ENCODE measurements at regions of chr9 and their contacts with region 1.

Region 1: GRCh38 chr9:17810728-17811571 is 232.1 kb downstream of the SH3GL2 start:
- DNase-seq: peak; percentile 85
- H3K4me3 ChIP-seq: no peak overlapping the region
- H3K27ac ChIP-seq: no peak overlapping the region
- H3K4me1 ChIP-seq: no peaks in the 10 kb centered on the region
- H3K27me3 ChIP-seq: no peaks in the 10 kb centered on the region
- CTCF ChIP-seq: peak; percentile 88 to 95 (median 93)
- POLR2A ChIP-seq: no peak

Region 2: GRCh38 chr9:17509701-17510100 is 301.2 kb before region 1 on chr9:
- intact Hi-C with region 1: no loop called
- DNase-seq: no peak
- H3K4me3 ChIP-seq: no peak overlapping the region
- H3K27ac ChIP-seq: no peak overlapping the region
- H3K4me1 ChIP-seq: no peaks in the 10 kb centered on the region
- H3K27me3 ChIP-seq: no peaks in the 10 kb centered on the region
- CTCF ChIP-seq: no peak
- POLR2A ChIP-seq: no peak

Region 3: GRCh38 chr9:18208154-18209059 is 397.5 kb after region 1 on chr9:
- intact Hi-C with region 1: loop called (anchors 10 kb)
- DNase-seq: peak; percentile 82
- H3K4me3 ChIP-seq: no peak overlapping the region
- H3K27ac ChIP-seq: no peak overlapping the region
- H3K4me1 ChIP-seq: no peaks in the 10 kb centered on the region
- H3K27me3 ChIP-seq: no peaks in the 10 kb centered on the region
- CTCF ChIP-seq: peak; percentile 59 to 70 (median 63)
- POLR2A ChIP-seq: no peak

Measured in testis (tissue), 5 donors.